PC-9 (cell line): ENCODE measurements at regions of chr2 and their contacts with region 1.

Region 1: DNA sequence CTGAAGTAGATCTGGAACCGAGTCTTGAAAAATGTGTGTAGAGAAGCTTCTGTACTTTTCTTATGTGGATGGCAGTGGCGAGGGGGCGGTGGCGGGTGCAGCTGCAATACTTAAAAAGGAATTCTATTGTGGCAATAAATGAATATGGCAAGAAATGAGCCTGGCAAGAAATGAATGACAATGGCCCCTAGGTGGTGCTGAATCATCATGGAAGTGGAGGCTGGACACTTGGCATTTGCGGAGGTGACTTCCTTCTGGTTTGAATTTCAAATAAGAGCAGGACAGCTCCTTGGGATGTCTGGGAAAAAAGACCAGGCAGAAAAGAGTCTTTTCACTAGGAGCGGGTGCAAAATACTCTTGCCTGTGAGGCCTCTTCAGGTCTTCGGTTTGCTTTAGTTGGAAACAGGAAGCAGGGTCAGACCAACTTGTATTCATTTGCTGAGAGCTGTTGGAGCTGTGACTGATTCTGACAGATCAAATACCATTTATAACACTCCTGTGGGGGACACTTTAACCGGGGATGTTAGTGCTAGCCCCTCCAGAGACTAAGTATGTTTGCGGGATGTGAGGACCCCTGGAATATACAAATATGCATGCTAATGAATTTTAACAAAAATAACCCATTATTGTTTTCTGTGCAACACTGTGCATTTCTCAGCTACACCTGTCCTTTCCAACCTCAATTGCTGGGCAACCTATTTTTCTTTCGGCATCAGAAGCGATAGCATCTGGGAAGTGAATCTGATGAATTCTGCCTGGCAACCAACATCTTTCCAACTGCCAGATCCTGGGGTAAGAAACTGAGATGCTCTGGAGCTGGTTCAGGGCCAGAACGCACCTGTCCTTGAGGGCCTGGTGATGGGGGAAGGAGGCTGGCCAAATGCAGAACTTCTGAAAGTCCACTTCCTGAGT is 35.4 kb downstream of the FASTKD2 start:
- DNase-seq: peak; percentile 46 to 59
- H3K4me3 ChIP-seq: no peak overlapping the region
- H3K27ac ChIP-seq: no peak overlapping the region
- H3K4me1 ChIP-seq: no peaks in the 10 kb centered on the region
- H3K27me3 ChIP-seq: no peaks in the 10 kb centered on the region
- CTCF ChIP-seq: peak; percentile 74

Region 2: GRCh38 chr2:206756816-206757215 is 43.9 kb before region 1 on chr2:
- CTCF ChIA-PET with region 1: no interaction called
- POLR2A ChIA-PET with region 1: no interaction called
- intact Hi-C with region 1: no loop called
- DNase-seq: no peak
- H3K4me3 ChIP-seq: no peak overlapping the region
- H3K27ac ChIP-seq: no peak overlapping the region
- H3K4me1 ChIP-seq: no peaks in the 10 kb centered on the region
- H3K27me3 ChIP-seq: no peaks in the 10 kb centered on the region
- CTCF ChIP-seq: no peak

Region 3: GRCh38 chr2:206823178-206823577 is 22.4 kb after region 1 on chr2:
- CTCF ChIA-PET with region 1: no interaction called
- POLR2A ChIA-PET with region 1: no interaction called
- intact Hi-C with region 1: no loop called
- DNase-seq: no peak
- H3K4me3 ChIP-seq: no peak overlapping the region
- H3K27ac ChIP-seq: no peak overlapping the region
- H3K4me1 ChIP-seq: no peaks in the 10 kb centered on the region
- H3K27me3 ChIP-seq: no peaks in the 10 kb centered on the region
- CTCF ChIP-seq: no peak

Region 4: DNA sequence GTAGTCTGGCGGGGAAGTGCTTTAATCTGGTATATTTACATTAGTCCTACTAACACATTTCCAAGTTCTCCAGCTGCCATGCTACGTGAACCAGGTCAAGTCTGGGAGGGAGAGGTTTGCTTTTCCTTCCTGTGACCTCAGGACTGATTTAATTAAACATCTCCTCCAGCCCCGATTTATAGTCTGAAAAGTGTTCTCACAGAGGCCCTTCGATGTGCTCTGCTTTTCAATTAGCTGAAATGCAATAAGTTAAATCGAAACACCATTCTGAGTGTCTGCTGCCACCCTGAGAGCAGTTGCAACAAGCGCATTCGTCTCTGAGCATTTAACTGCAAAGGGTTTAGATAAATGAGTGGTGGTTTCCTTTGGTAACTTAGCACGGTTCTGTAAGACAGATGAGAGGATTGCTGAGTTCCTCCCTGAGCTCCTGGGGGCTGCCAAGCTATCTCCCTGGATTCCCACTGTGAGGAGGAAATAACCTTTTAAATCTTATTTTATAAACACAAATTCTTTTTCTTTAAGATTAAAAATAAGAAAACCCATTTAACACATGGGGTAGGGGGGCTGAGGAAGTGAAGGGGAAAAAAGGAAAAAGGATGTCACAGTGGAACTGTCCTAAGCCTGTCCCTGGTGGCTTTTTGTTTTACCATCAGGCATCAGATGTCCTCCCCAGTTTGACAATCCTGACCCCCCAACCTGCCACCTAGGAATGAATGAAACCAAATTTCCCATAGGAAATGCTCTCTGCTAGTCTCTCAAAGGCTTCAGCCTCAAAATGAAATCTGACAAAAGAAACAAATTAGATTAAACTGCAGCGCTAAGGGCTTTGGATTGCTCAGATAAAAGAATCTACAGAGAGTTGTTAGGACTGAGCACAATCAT is 672.5 kb after region 1 on chr2:
- CTCF ChIA-PET with region 1: interaction called, 3 read pairs
- POLR2A ChIA-PET with region 1: no interaction called
- intact Hi-C with region 1: loop called (anchors 1 kb)
- DNase-seq: peak; percentile 40 to 46
- H3K4me3 ChIP-seq: no peak overlapping the region
- H3K27ac ChIP-seq: no peak overlapping the region
- H3K4me1 ChIP-seq: peaks cover 18% of the 10 kb centered on the region
- H3K27me3 ChIP-seq: no peaks in the 10 kb centered on the region
- CTCF ChIP-seq: peak; percentile 64